OCI-LY7 (cell line): ENCODE measurements at regions of chr10 and their contacts with region 1.

Region 1: DNA sequence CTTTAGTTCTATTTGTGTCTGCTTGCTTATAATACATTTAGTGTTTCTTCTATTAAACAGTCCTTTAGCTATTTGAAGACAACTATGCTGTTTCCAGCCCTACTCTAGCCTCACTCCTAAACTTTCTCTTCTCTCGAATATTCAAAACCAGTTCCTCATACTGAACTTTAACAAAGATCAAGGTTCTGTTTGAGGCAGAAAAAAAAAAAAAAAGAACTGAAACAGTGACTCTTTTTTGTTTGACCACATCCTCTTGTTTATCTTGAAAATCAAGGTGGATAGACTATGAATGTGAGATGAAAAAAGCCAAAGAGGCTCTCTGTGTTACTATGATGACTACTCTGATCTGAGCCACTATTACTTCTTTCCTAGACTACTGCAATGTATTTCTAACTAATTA is 154.3 kb downstream of the ZNF365 start:
- DNase-seq: peak; percentile 90
- H3K4me3 ChIP-seq: peak overlapping the region; percentile 51
- H3K27ac ChIP-seq: peak overlapping the region; percentile 96
- H3K4me1 ChIP-seq: peaks cover 56% of the 10 kb centered on the region
- CTCF ChIP-seq: no peak

Region 2: DNA sequence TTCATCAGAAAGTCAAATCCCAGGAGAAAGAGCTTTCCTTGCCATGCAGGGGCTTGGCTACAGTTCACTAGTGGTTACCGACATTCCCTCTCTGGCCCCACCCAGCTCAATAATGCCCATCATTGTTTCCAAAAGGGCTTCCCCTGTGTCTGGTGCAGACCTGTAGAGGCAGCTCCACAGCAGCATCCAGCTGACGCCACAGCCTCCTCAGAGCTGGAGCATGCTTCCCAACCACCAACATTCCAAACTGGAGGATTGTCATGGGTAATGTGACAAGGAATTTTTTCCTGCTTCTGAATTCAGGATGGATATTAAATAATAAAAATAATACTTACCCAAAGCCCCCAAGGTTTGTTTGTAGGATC is 76.8 kb before region 1 on chr10:
- CTCF ChIA-PET with region 1: interaction called, 6 read pairs
- POLR2A ChIA-PET with region 1: interaction called, 72 read pairs
- intact Hi-C with region 1: loop called (anchors 2 kb)
- DNase-seq: no peak
- H3K4me3 ChIP-seq: no peak overlapping the region
- H3K27ac ChIP-seq: peak overlapping the region; percentile 13
- H3K4me1 ChIP-seq: peaks cover 39% of the 10 kb centered on the region
- CTCF ChIP-seq: no peak

Region 3: DNA sequence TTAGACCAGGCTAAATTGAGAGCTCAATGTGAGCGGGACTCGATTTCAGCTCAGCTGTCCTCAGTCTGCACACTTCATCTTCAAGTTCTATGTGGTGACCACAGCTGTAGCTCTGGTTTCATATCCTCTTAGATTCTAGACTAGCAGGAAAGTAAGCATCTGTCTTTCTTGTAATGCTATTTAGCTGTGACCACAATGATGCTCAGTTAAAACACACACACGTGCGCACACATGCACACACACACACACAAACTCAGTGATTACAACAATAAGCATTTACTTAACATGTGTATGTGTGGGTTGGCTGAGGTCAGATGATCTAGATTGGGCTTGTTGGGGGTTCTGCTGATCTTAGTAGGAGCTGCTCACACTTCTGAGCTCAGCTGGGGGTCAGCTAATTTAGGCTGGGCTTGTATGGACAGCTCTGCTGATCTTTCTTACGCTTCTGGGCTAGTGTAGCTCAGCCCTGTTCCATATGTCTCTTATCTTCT is 71.8 kb before region 1 on chr10:
- CTCF ChIA-PET with region 1: interaction called, 6 read pairs
- POLR2A ChIA-PET with region 1: interaction called, 72 read pairs
- intact Hi-C with region 1: loop called (anchors 2 kb)
- DNase-seq: peak; percentile 97
- H3K4me3 ChIP-seq: peak overlapping the region; percentile 14
- H3K27ac ChIP-seq: peak overlapping the region; percentile 80
- H3K4me1 ChIP-seq: peaks cover 49% of the 10 kb centered on the region
- CTCF ChIP-seq: no peak

Region 4: GRCh38 chr10:62517252-62517651 is 11.2 kb before region 1 on chr10:
- CTCF ChIA-PET with region 1: no interaction called
- POLR2A ChIA-PET with region 1: interaction called, 12 read pairs
- intact Hi-C with region 1: no loop called
- DNase-seq: no peak
- H3K4me3 ChIP-seq: no peak overlapping the region
- H3K27ac ChIP-seq: no peak overlapping the region
- H3K4me1 ChIP-seq: no peaks in the 10 kb centered on the region
- CTCF ChIP-seq: no peak

Region 5: DNA sequence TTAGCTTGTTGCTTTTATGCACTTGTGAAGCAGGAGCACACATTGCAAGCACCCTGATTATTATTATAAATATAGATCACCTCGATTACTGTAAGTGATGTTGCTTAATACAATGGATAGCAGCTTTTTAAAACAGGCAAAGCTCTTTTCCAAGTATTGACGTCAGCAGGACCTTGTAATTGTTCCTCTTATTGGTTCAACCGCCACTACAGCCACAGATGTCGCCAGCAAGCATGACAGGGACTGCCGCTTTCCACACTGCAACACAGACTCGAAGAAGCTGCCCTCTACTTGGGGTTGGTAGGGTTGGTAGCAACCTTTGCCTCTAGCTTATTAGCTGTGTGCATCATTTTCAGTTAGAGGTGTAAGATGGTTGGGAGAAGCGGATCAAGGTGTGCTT is 13.4 kb after region 1 on chr10:
- CTCF ChIA-PET with region 1: interaction called, 5 read pairs
- POLR2A ChIA-PET with region 1: interaction called, 10 read pairs
- intact Hi-C with region 1: loop called (anchors 1 kb)
- DNase-seq: no peak
- H3K4me3 ChIP-seq: no peak overlapping the region
- H3K27ac ChIP-seq: no peak overlapping the region
- H3K4me1 ChIP-seq: peaks cover 13% of the 10 kb centered on the region
- CTCF ChIP-seq: no peak

Region 6: DNA sequence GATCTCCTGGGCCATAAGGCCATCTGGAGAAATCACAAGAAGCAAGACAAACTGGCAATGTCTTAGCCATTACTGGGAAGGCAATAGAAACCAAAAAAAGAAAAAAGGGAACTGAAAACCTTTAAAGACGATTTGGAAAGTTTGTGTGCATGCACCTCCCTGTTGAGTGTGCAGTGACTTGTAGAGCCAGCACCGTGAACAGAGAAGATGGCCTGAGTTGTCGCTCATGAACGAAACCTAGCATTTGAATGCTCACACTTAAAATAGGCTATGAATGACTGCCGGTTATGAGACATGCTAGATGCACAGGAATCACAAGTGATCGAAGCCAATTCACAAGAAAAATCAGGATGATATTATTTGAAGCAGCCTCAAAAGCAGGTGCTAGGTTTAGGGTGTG is 124.8 kb after region 1 on chr10:
- CTCF ChIA-PET with region 1: no interaction called
- POLR2A ChIA-PET with region 1: interaction called, 3 read pairs
- intact Hi-C with region 1: loop called (anchors 5 kb)
- DNase-seq: peak; percentile 99
- H3K4me3 ChIP-seq: peak overlapping the region; percentile 42
- H3K27ac ChIP-seq: peak overlapping the region; percentile 96
- H3K4me1 ChIP-seq: peaks cover 74% of the 10 kb centered on the region
- CTCF ChIP-seq: no peak

Region 7: DNA sequence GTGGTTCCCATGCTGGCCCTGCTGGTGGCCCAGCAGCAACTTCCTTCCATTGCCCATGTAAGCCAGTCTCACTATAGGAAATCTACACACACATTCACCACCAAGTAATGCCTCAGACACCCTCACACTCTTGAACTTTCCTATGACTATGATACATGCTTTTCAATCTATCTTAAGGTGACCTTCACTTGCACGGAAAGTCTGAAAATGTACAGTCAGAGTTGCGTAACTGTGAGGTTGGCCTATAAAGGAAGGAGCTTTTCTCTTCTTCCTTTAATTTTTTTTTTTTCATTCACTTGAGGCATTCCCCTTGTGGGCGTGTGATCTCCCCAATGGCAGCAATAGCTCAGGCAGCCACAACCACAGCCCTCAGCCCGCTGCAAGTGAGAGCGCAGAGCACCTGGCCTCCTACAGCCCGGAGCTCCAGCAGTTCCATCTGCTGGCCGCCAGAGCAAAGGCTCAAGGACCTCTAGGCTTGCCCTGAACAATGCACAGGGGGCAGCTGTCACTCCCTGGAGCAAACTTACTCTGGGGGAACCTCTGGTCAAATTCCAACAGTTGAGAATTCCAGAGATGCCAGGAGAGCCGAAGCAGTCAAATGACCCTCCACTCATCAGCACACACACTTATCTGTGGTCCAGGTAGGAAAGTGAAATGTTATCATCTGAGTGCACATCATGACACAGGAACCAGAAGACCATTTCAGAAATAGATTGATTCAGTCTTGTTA is 152.9 kb after region 1 on chr10:
- CTCF ChIA-PET with region 1: no interaction called
- POLR2A ChIA-PET with region 1: no interaction called
- intact Hi-C with region 1: no loop called
- DNase-seq: peak; percentile 73
- H3K4me3 ChIP-seq: no peak overlapping the region
- H3K27ac ChIP-seq: no peak overlapping the region
- H3K4me1 ChIP-seq: peaks cover 10% of the 10 kb centered on the region
- CTCF ChIP-seq: peak; percentile 64

Region 8: DNA sequence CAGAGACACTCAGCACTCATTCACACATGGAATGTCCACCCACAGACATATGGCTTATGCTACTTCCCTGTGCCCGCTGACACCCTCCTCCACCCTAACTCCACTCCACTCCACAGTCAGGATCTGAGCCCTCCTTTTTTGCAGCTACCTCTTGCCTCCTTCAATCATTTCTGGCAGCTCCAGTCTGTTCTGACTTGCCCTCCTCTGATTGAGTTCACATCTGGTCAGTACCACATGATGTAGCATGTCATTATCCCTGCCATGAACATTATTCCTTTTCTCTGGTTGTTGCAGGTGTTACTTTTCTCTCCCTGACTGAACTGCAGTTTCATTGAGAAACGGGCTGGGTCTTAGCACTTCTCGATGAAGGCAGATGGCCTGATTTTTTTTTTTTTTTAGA is 417.8 kb after region 1 on chr10:
- CTCF ChIA-PET with region 1: no interaction called
- POLR2A ChIA-PET with region 1: no interaction called
- intact Hi-C with region 1: no loop called
- DNase-seq: no peak
- H3K4me3 ChIP-seq: no peak overlapping the region
- H3K27ac ChIP-seq: no peak overlapping the region
- H3K4me1 ChIP-seq: no peaks in the 10 kb centered on the region
- CTCF ChIP-seq: no peak

Region 9: DNA sequence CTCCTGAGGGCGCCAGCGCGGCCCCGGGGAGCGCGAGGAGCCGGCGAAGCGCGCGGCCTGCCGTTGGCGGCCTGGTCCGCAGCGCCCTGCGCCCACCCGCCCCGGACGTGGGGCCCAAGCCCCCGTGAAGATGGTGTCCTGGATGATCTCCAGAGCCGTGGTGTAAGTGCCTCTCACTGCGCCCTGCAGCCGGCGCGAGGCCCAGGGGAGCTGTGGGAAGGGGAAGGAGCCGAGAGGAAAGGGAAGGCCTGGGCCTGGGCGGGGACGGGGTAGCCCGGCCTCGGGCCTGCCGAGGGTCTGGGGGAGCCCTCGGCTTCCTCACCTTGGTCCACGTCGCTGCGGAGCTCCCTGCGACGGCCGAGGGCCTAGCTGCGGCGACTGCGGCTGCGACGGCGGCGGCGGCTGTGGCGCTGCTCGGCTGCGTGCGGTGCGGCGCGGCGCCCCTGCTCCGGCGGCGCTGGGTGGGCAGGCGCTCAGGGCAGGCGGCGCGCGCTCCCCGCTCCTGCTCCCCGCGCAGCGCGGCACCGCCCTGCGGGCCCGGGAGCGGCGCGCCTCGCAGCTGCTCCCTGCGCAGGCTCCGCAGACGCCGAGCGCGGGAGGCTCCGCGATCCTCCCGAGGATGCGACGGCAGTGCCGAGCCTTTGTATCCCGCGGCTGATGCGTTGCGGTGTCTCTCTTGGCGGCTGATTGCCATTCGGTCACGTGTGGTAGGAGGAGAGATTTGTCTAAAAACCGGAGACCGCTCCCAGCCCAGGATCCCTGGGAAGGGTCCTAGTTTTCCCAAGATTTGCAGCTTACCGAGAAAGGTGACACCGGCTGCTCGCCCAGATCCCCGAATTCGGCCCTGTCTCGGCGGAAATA is 993.2 kb after region 1 on chr10:
- CTCF ChIA-PET with region 1: no interaction called
- POLR2A ChIA-PET with region 1: no interaction called
- intact Hi-C with region 1: no loop called
- DNase-seq: peak; percentile 79
- H3K4me3 ChIP-seq: peak overlapping the region; percentile 76
- H3K27ac ChIP-seq: peak overlapping the region; percentile 73
- H3K4me1 ChIP-seq: peaks cover 29% of the 10 kb centered on the region
- CTCF ChIP-seq: no peak